ENCODE measurements at regions of chr6 and their contacts with region 1.

Region 1: DNA sequence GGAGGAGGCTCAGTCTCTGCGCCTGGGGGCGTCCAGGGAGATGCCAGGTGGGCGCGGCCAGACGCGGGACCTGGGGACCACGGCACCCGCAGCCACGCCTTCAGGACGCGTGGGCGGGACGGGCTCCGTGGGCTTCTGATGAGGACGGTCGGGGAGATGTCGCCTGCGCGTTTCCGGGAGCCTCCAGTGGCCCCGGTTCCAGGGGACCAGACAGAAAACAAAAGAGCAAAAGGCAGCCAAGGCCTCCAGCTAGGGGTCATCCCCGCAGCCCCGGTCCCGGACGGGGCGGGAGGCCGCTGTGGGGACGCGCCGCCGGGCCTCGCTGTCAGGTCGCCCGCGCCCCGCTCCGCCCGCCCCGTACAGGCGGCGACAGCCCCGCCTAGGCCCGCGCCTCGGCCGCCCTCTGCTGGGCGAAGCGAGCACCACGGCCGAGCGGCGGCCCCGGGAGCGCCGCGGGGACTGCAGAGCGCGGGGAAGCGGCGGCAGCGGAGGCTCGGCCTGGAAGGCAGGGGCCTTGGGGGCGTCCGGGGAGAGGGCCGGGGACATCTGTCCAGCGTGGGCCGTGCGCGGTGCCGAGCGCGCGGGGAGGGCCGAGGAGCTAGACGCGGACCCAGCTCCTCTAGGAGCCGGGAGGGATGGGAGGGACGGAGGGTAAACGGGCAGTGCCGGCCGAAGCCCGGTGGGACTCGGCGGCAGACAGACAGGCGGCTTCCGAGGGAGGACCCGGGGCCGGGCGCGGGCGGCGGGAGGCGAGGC is 48.7 kb downstream of the TMEM242 start:
- DNase-seq: peak; percentile 78
- H3K4me3 Mint-ChIP-seq: peak overlapping the region; percentile 81
- H3K27ac Mint-ChIP-seq: peak overlapping the region; percentile 81
- H3K4me1 Mint-ChIP-seq: peaks cover 8% of the 10 kb centered on the region
- H3K27me3 Mint-ChIP-seq: peaks cover 5% of the 10 kb centered on the region

Region 2: DNA sequence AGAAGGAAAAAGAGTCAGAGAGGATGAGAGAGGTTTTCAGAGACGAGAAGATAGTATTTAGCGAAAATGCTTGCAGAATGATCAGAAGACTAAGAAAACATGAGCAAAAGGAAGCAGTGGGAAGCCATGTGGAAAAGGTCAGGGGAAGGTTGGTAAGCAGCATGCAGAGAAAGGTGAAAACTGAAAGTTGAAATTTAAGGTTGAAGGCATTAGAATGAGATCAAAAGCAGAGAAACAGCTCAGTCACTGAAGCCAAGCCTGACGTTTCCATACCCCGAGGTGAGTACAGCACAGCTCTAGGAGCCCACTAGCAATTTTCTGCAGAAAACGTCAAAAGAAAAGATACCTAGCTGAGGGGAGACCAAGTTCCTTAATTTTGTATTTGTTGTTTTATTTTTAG is 1941.2 kb before region 1 on chr6:
- intact Hi-C with region 1: loop called (anchors 2 kb)
- DNase-seq: no peak
- H3K4me3 Mint-ChIP-seq: peak overlapping the region; percentile 19
- H3K27ac Mint-ChIP-seq: peak overlapping the region; percentile 76
- H3K4me1 Mint-ChIP-seq: peaks cover 35% of the 10 kb centered on the region
- H3K27me3 Mint-ChIP-seq: no peaks in the 10 kb centered on the region

Region 3: DNA sequence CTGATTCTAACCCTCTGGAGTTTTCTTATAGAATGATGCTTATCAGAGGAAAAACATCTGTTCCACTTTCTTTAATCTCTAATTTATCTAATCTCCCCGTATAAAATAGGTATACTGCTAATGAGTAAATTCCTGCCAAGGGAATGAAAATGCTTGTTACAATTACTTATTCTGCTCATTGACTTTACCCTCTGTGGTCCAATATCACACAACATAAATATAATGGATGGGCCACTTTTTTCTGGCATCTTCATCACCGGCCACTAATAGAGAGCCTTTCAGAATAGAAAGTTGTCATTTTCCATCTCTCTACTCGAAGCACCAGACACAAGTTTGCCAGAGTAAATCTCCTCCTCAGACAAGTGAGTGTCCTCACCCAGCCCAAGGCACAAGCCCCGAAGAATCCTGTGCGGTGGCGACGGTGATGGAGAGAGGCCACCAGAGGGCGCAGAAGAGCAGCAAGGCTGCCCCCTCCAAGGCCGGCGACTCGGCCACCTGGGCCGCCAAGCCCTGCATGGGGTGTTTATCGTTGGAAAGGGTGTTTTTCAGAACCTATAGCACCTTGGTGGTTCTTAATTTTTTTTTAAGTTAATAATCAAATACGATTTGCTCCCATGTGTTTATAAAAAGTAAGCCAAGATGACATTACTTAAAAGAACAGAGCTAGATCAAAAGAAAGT is 710.4 kb before region 1 on chr6:
- intact Hi-C with region 1: loop called (anchors 5 kb)
- DNase-seq: peak; percentile 61
- H3K4me3 Mint-ChIP-seq: no peak overlapping the region
- H3K27ac Mint-ChIP-seq: no peak overlapping the region
- H3K4me1 Mint-ChIP-seq: peaks cover 7% of the 10 kb centered on the region
- H3K27me3 Mint-ChIP-seq: peaks cover 5% of the 10 kb centered on the region

Region 4: DNA sequence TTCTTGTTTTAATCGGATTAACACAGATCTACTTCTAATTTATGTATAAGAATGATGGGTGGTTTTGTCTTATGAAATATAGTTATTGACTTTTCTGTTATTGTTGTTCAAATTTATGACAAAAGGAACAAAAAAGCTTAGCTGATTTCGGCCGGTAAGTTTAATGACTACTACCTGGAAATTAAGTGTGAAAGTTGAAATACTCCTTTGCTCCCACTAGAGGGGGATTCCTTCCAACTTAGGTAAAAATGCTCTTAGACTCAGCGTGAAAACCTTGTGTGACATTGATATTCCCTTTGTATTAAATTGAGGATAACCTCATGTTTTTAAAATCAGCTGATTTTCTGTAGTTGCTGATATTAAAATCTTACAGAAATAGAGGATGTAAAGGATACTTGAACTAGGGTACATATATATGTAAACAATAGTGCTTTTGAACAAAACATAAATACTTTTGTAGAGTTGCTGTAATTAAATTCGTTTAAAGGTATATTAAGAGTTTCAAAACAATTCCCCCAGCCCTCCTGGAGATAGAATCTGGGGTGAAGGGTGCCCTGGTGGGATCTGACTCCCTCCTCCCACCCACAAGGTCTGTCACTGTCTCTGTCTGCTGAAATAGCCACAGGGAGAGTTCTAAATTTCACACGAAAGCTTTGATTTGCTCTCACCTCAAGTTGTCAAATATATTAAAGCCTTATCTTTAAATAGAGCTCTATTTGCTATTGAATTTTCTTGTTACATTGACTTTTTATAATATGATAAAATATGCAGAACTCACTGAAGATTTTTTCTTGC is 240.0 kb before region 1 on chr6:
- intact Hi-C with region 1: loop called (anchors 1 kb)
- DNase-seq: no peak
- H3K4me3 Mint-ChIP-seq: peak overlapping the region; percentile 49
- H3K27ac Mint-ChIP-seq: no peak overlapping the region
- H3K4me1 Mint-ChIP-seq: peaks cover 21% of the 10 kb centered on the region
- H3K27me3 Mint-ChIP-seq: no peaks in the 10 kb centered on the region

Region 5: DNA sequence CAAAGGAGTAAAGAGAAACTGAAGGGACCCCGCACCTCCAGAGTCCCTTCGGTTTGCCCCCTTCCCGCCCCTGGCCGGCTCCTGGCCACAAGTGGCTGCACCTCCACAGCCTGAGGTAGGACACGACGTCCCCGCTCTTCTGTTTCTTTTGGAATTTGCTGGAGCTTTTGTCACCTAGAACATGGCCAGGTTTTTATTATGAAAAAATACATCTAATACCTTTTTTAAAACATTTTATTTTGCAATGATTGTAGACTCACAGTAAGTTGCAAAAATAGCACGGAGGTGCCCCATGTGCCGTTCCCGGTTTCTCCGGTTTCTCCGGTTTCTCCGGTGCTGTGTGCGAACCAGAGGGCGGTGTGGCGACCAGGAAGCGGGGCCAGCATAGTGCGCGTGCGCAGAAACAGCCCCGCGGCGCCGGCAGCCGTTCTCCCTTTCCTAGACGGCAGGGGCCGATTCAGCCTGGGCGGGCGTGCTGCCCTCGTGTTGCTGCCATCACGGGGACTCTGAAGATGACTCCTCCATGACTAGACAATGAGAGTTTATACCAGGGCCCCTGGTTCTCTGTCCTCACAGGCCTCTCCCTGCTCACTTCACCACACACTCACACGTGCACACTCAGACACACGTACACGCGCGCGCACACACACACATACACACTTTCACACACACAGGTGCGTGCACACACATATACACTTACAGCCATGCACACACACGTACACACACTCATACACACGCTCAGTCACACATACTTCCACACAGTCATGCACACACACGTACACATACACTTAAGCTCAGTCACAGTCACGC is 53.4 kb before region 1 on chr6:
- intact Hi-C with region 1: loop called (anchors 2 kb)
- DNase-seq: peak; percentile 78
- H3K4me3 Mint-ChIP-seq: peak overlapping the region; percentile 74
- H3K27ac Mint-ChIP-seq: peak overlapping the region; percentile 70
- H3K4me1 Mint-ChIP-seq: peaks cover 30% of the 10 kb centered on the region
- H3K27me3 Mint-ChIP-seq: no peaks in the 10 kb centered on the region

Region 6: DNA sequence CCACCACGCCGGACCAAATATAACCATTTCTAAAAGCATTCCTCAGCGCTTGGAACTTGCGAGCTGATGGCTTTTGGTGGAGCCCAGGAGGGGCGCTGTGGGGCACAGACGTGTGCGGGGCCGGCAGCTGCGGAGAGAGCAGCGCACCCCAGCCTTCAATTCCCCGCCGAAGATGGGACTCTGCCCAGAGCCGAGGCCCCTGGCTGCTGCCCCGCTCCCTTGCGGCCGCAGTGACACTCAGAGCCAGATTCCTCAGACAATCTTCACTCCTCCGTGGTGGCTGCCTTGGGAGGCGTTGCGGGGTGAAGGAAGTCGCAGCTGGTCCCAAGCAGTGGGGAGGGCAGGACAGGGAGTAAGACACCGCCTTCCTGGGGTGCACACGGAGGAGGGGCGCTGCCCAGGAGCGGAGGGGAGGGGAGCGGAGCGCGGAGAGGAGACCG is 39.0 kb before region 1 on chr6:
- intact Hi-C with region 1: loop called (anchors 5 kb)
- DNase-seq: peak; percentile 31
- H3K4me3 Mint-ChIP-seq: peak overlapping the region; percentile 84
- H3K27ac Mint-ChIP-seq: no peak overlapping the region
- H3K4me1 Mint-ChIP-seq: peaks cover 11% of the 10 kb centered on the region
- H3K27me3 Mint-ChIP-seq: peaks cover 57% of the 10 kb centered on the region

Region 7: GRCh38 chr6:157379656-157380454 is 105.2 kb after region 1 on chr6:
- intact Hi-C with region 1: loop called (anchors 1 kb)
- DNase-seq: peak; percentile 84
- H3K4me3 Mint-ChIP-seq: peak overlapping the region; percentile 74
- H3K27ac Mint-ChIP-seq: peak overlapping the region; percentile 59
- H3K4me1 Mint-ChIP-seq: peaks cover 29% of the 10 kb centered on the region
- H3K27me3 Mint-ChIP-seq: peaks cover 14% of the 10 kb centered on the region